Ovary (tissue), 10 donors: ENCODE measurements at regions of chr7 and their contacts with region 1.

Region 1: GRCh38 chr7:15305002-15305600 is 256.7 kb downstream of the AGMO start:
- DNase-seq: peak in 4 of 5 donors; percentile 18 to 45 (median 38)
- H3K4me3 ChIP-seq: no peak overlapping the region
- H3K27ac ChIP-seq: no peak overlapping the region
- H3K4me1 ChIP-seq: no peaks in the 10 kb centered on the region
- H3K27me3 ChIP-seq: no peaks in the 10 kb centered on the region
- CTCF ChIP-seq: peak in 2 of 3 donors; percentile 19 to 33
- EP300 ChIP-seq: no peak
- POLR2A ChIP-seq: no peak

Region 2: GRCh38 chr7:15113752-15114151 is 191.3 kb before region 1 on chr7:
- intact Hi-C with region 1: no loop called
- DNase-seq: no peak
- H3K4me3 ChIP-seq: no peak overlapping the region
- H3K27ac ChIP-seq: no peak overlapping the region
- H3K4me1 ChIP-seq: no peaks in the 10 kb centered on the region
- H3K27me3 ChIP-seq: no peaks in the 10 kb centered on the region
- CTCF ChIP-seq: no peak
- EP300 ChIP-seq: no peak
- POLR2A ChIP-seq: no peak

Region 3: GRCh38 chr7:16071246-16071857 is 766.3 kb after region 1 on chr7:
- intact Hi-C with region 1: loop called in 1 of 4 experiments (anchors 5 kb)
- DNase-seq: peak in 1 of 5 donors; percentile 18
- H3K4me3 ChIP-seq: no peak overlapping the region
- H3K27ac ChIP-seq: no peak overlapping the region
- H3K4me1 ChIP-seq: peaks cover 3% of the 10 kb centered on the region
- H3K27me3 ChIP-seq: no peaks in the 10 kb centered on the region
- CTCF ChIP-seq: peak; percentile 49 to 81 (median 80)
- EP300 ChIP-seq: no peak
- POLR2A ChIP-seq: no peak